K562 (cell line): ENCODE measurements at regions of chr3 and their contacts with region 1.

Region 1: GRCh38 chr3:168165390-168166269 is 69.9 kb upstream of the GOLIM4 start:
- DNase-seq: peak; percentile 46 to 87 (median 58)
- ATAC-seq: peak; percentile 90
- H3K4me3 ChIP-seq: no peak overlapping the region
- H3K27ac ChIP-seq: peak overlapping the region; percentile 29; the same call in 2 of the 3 replicates
- H3K4me1 ChIP-seq: no peaks in the 10 kb centered on the region
- H3K27me3 ChIP-seq: no peaks in the 10 kb centered on the region
- CTCF ChIP-seq: peak; percentile 78 to 92 (median 88)
- EP300 ChIP-seq: no peak
- POLR2A ChIP-seq: no peak
- RAD21 ChIP-seq: peak; percentile 97 to 98

Region 2: GRCh38 chr3:167520266-167521005 is 645.2 kb before region 1 on chr3:
- CTCF ChIA-PET with region 1: no interaction called
- POLR2A ChIA-PET with region 1: no interaction called
- in situ Hi-C with region 1: no loop called
- intact Hi-C with region 1: no loop called
- DNase-seq: no peak
- ATAC-seq: no peak
- H3K4me3 ChIP-seq: no peak overlapping the region
- H3K27ac ChIP-seq: no peak overlapping the region
- H3K4me1 ChIP-seq: no peaks in the 10 kb centered on the region
- H3K27me3 ChIP-seq: no peaks in the 10 kb centered on the region
- CTCF ChIP-seq: no peak
- EP300 ChIP-seq: no peak
- POLR2A ChIP-seq: no peak
- RAD21 ChIP-seq: no peak

Region 3: GRCh38 chr3:167929968-167930367 is 235.7 kb before region 1 on chr3:
- CTCF ChIA-PET with region 1: interaction called, 3 read pairs
- POLR2A ChIA-PET with region 1: no interaction called
- in situ Hi-C with region 1: loop called (anchors 25 kb)
- intact Hi-C with region 1: loop called (anchors 1 kb)
- DNase-seq: no peak
- ATAC-seq: no peak
- H3K4me3 ChIP-seq: no peak overlapping the region
- H3K27ac ChIP-seq: no peak overlapping the region
- H3K4me1 ChIP-seq: no peaks in the 10 kb centered on the region
- H3K27me3 ChIP-seq: no peaks in the 10 kb centered on the region
- CTCF ChIP-seq: no peak
- EP300 ChIP-seq: no peak
- POLR2A ChIP-seq: no peak
- RAD21 ChIP-seq: no peak

Region 4: DNA sequence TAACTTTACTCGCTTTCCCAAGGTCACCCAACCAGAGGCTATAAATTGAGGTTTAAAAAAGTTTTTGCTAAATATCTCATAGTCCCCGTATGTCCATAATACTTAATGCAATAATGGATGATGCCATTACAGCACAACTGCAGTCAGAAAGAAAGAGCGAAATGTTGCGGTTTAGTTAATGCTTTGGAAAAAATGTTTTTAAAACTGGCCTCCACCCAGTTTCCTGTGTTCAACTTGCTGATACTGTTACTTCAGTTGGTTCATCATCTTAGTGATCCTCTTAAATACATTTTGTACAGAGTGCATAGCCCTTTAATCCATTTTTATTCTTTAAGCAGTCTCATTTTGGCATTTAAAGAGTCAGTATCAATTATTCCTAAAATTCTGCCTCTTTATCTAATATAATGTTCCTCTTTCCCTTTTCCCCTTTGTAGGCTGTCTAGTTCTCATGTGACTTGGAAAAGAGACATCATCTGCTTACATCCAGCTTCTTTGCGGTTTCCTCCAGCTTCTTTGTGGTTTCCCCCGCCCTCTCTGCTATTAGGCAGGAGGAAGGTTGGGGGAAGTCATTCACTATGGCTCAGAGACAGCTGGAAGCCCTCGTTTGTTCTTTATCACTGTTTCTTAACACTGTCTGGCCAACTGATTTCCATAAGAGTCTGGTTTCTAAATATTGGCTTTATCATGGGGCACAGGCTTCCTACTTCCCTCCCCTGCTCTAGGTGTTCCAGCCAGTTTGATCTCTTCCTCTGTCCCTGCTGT is 224.2 kb before region 1 on chr3:
- CTCF ChIA-PET with region 1: no interaction called
- POLR2A ChIA-PET with region 1: no interaction called
- in situ Hi-C with region 1: loop called (anchors 25 kb)
- intact Hi-C with region 1: no loop called
- DNase-seq: peak; percentile 27 to 88 (median 48)
- ATAC-seq: peak; percentile 96
- H3K4me3 ChIP-seq: no peak overlapping the region
- H3K27ac ChIP-seq: no peak overlapping the region
- H3K4me1 ChIP-seq: peaks cover 0 to 16% of the 10 kb centered on the region in 2 experiments; a peak in 3 of 5 replicates
- H3K27me3 ChIP-seq: no peaks in the 10 kb centered on the region
- CTCF ChIP-seq: no peak
- EP300 ChIP-seq: peak; percentile 79
- POLR2A ChIP-seq: no peak
- RAD21 ChIP-seq: peak in 1 of 2 experiments; percentile 29; a peak in 3 of 4 replicates

Region 5: GRCh38 chr3:168047190-168047795 is 118.3 kb before region 1 on chr3:
- CTCF ChIA-PET with region 1: interaction called, 98 read pairs
- POLR2A ChIA-PET with region 1: interaction called, 3 read pairs
- in situ Hi-C with region 1: loop called (anchors 5 kb)
- intact Hi-C with region 1: loop called (anchors 1 kb)
- DNase-seq: peak; percentile 34 to 77 (median 50)
- ATAC-seq: peak; percentile 91
- H3K4me3 ChIP-seq: no peak overlapping the region
- H3K27ac ChIP-seq: no peak overlapping the region
- H3K4me1 ChIP-seq: no peaks in the 10 kb centered on the region
- H3K27me3 ChIP-seq: no peaks in the 10 kb centered on the region
- CTCF ChIP-seq: peak; percentile 73 to 99 (median 95)
- EP300 ChIP-seq: no peak
- POLR2A ChIP-seq: no peak
- RAD21 ChIP-seq: peak; percentile 99

Region 6: DNA sequence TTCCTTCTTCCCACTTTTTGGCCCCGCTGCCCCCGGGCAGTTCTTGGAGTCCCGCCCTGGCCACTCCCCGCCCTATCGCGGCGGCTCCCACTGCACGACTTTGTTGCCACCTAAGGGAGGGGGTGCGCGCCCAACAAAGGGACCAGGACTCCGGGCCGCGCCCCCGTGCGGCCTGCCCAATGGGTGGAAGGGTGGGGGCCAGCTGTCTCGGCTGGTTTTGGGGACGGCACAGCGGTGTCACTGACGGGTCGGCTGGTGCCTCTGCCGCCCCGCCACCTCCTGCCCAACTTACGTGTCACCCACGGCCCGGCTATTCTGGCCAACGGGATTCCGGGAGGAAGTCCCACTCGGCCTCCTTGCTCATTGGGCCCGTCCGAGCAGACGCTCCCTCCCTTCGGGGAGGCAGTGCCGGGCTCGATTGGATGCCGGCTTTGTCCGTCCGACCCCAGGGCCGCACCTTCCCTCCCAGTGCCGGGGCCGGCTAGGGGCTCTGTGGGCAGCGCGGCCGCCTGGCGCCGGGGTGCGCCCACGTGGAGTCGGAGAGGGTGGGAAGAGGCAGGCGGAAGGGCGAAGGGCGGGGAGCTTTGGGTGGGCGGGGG is 69.9 kb before region 1 on chr3 and contains the start of gene GOLIM4:
- CTCF ChIA-PET with region 1: no interaction called
- POLR2A ChIA-PET with region 1: interaction called, 5 read pairs
- in situ Hi-C with region 1: no loop called
- intact Hi-C with region 1: loop called (anchors 1 kb)
- DNase-seq: peak; percentile 90 to 96 (median 92)
- ATAC-seq: peak; percentile 91
- H3K4me3 ChIP-seq: peak within 1 kb of the TSS; percentile 77
- H3K27ac ChIP-seq: peak within 1 kb of the TSS; percentile 96
- H3K4me1 ChIP-seq: peaks cover 13 to 31% of the 10 kb centered on the region in 2 experiments
- H3K27me3 ChIP-seq: no peaks in the 10 kb centered on the region
- CTCF ChIP-seq: peak in 2 of 3 experiments; percentile 22 to 30; a peak in 3 of 6 replicates
- EP300 ChIP-seq: no peak
- POLR2A ChIP-seq: peak; percentile 70
- RAD21 ChIP-seq: peak; percentile 14 to 16; a peak in 1 of 4 replicates
- polyA plus RNA-seq, gene GOLIM4: 11.3 to 12.0 TPM

Region 7: DNA sequence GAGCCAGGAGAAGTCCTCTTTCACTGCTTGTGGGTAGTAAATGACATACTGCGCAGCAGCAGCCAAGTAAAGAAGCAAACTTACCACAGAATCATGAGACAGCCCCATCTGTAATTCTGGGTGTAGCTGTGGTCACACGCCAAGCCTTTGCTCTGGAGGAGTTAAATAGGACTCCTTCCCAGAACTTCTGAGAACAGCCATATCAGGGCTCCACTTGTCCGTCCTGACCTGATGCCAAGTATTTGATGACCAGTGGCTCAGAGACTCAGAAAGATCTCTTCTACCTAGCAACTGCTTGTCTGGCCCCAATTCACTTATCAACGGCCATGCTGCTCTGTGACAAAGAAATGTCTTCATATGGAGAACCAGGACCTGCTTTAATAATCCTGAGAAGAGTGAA is 49.4 kb before region 1 on chr3:
- CTCF ChIA-PET with region 1: no interaction called
- POLR2A ChIA-PET with region 1: interaction called, 5 read pairs
- in situ Hi-C with region 1: no loop called
- intact Hi-C with region 1: loop called (anchors 2 kb)
- DNase-seq: peak; percentile 38 to 94 (median 65)
- ATAC-seq: peak; percentile 94
- H3K4me3 ChIP-seq: no peak overlapping the region; the same call in 1 of the 2 replicates
- H3K27ac ChIP-seq: peak overlapping the region; percentile 73
- H3K4me1 ChIP-seq: peaks cover 0 to 34% of the 10 kb centered on the region in 2 experiments; a peak in 3 of 5 replicates
- H3K27me3 ChIP-seq: no peaks in the 10 kb centered on the region
- CTCF ChIP-seq: peak in 1 of 3 experiments; percentile 5; a peak in 1 of 6 replicates
- EP300 ChIP-seq: peak; percentile 39; the same call in 1 of the 2 replicates
- POLR2A ChIP-seq: no peak
- RAD21 ChIP-seq: peak; percentile 25 to 28

Region 8: GRCh38 chr3:168457962-168458539 is 292.4 kb after region 1 on chr3:
- CTCF ChIA-PET with region 1: no interaction called
- POLR2A ChIA-PET with region 1: no interaction called
- in situ Hi-C with region 1: no loop called
- intact Hi-C with region 1: no loop called
- DNase-seq: no peak
- ATAC-seq: no peak
- H3K4me3 ChIP-seq: no peak overlapping the region
- H3K27ac ChIP-seq: no peak overlapping the region
- H3K4me1 ChIP-seq: no peaks in the 10 kb centered on the region
- H3K27me3 ChIP-seq: no peaks in the 10 kb centered on the region
- CTCF ChIP-seq: no peak
- EP300 ChIP-seq: no peak
- POLR2A ChIP-seq: no peak
- RAD21 ChIP-seq: no peak